ENCODE measurements at regions of chr2 and their contacts with region 1.

Region 1: GRCh38 chr2:157468931-157469708 is 25.2 kb upstream of the CYTIP start:
- DNase-seq: peak; percentile 82
- H3K4me3 Mint-ChIP-seq: peak overlapping the region; percentile 78
- H3K27ac Mint-ChIP-seq: peak overlapping the region; percentile 97
- H3K4me1 Mint-ChIP-seq: peaks cover 82% of the 10 kb centered on the region
- H3K27me3 Mint-ChIP-seq: no peaks in the 10 kb centered on the region

Region 2: DNA sequence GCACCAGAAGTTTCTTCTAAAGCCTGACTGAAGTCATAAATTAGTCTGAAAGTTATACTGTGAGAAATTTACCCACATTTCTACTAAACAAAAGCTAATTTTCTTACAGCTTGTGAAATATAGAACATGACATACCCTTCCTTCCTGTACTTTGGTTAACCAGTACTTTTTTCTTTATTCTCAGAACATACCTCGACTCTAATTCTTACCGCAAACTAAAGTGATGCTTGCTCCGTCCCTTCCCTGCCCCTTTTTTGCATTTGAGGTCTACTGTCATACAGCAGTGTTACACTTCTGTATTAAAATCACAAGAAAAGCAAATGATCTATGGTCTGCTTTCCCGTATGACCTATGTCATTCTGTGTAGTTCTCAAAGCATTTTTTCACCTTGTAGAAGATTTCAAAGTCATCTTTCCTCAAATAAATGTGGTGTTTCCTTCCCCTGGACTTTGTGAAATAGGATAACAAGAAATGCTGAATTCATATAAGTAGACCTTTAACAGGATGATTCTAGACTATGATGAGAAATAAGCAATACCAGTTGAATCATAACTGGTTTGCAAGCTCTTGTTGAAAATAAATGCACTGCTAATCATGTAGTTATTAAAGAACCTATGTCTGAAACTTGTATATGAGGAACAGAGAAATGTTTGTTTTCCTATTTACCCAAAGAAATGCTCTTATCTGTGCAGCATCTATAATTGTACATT is 55.6 kb before region 1 on chr2:
- intact Hi-C with region 1: loop called (anchors 1 kb)
- DNase-seq: peak; percentile 88
- H3K4me3 Mint-ChIP-seq: peak overlapping the region; percentile 87
- H3K27ac Mint-ChIP-seq: peak overlapping the region; percentile 95
- H3K4me1 Mint-ChIP-seq: peaks cover 71% of the 10 kb centered on the region
- H3K27me3 Mint-ChIP-seq: no peaks in the 10 kb centered on the region

Measured in activated CD4-positive, alpha-beta T cell treated with anti-CD3 and anti-CD28 coated beads, Interleukin-2, amount 10 ng/mL, durations not matched to agents 24 days and 14 days (primary cell).